Endothelial cell of umbilical vein (primary cell): ENCODE measurements at regions of chr3 and their contacts with region 1.

Region 1: GRCh38 chr3:169497567-169498257 is 165.8 kb downstream of the MECOM start:
- DNase-seq: peak; percentile 94
- H3K4me3 ChIP-seq: no peak overlapping the region
- H3K27ac ChIP-seq: peak overlapping the region; percentile 100
- H3K4me1 ChIP-seq: peaks cover 73% of the 10 kb centered on the region
- H3K27me3 ChIP-seq: no peaks in the 10 kb centered on the region
- CTCF ChIP-seq: no peak
- POLR2A ChIP-seq: no peak

Region 2: DNA sequence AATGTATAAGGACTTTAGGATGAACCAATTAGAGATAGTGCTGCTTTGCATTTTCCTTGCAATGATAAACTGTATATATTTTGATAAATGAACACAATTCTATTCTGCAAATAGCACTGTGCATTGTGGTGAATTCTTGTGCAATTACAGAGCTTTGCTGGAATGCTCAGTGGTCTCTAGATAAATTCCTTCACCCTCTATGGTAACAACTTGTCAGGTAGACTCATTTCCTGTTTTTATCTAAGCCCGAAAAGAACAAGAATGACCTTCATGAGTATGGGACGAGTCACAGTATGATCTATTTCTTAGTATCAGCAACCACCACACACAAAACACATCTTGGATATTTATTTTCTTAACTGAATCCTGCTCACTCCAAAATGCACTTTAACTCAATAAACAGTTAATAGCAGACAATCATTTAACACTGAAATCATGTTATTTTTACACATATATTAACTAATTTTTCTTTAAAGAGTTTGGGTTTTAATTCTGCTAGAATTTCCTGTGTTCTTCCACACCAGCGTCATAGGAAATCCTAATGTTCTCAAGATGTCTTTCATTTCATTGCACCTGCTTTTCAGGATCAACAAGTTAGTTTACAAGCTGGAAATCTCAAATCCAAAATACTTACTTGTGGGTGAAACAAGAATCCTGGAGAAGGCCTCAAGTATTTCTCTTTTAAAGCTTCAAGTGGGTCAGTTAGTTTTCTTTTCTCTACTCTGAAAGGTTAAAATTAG is 385.4 kb before region 1 on chr3:
- CTCF ChIA-PET with region 1: interaction called, 4 read pairs
- POLR2A ChIA-PET with region 1: no interaction called
- dilution Hi-C with region 1: no loop called
- intact Hi-C with region 1: loop called (anchors 1 kb)
- DNase-seq: peak; percentile 86
- H3K4me3 ChIP-seq: peak overlapping the region in 1 of 3 experiments; percentile 14
- H3K27ac ChIP-seq: peak overlapping the region; percentile 96
- H3K4me1 ChIP-seq: peaks cover 63% of the 10 kb centered on the region
- H3K27me3 ChIP-seq: no peaks in the 10 kb centered on the region
- CTCF ChIP-seq: no peak
- POLR2A ChIP-seq: peak; percentile 71

Region 3: DNA sequence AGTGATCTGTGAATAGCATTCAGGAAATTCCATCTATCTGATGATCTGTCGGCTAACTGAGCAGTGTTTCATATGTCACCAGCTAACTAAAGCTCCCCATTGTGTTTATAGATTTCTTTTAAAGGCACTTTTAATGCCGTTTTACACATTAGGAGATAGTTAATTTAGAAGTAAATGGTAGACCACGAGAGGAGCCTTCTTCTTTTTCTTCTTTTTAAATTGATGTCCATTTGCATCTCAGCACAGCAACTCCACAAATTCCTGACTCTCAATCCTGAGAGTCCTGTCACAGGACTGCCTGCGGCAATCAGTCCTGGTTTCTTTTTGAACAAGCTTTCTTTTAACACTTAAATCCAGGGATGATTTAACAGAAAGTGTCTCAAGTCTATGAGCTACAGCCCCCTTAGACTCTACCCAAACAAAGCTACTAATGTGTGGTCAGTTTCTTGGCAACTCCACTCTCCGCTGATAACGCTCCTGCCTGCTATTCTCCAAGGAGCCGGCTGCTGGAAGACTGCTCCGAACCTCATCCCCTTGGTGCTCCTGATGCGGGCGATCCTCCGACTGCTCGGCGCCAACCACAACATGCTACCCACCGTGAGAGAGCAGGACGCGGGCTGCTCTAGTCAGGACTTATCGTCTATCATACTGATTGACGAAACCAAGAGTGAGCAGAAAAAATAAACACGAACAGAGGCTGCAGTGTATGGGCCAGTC is 255.6 kb before region 1 on chr3:
- CTCF ChIA-PET with region 1: no interaction called
- POLR2A ChIA-PET with region 1: no interaction called
- dilution Hi-C with region 1: no loop called
- intact Hi-C with region 1: loop called (anchors 2 kb)
- DNase-seq: peak; percentile 87
- H3K4me3 ChIP-seq: peak overlapping the region; percentile 40 to 79 (median 42)
- H3K27ac ChIP-seq: peak overlapping the region; percentile 97
- H3K4me1 ChIP-seq: peaks cover 64% of the 10 kb centered on the region
- H3K27me3 ChIP-seq: no peaks in the 10 kb centered on the region
- CTCF ChIP-seq: no peak
- POLR2A ChIP-seq: peak; percentile 42

Region 4: DNA sequence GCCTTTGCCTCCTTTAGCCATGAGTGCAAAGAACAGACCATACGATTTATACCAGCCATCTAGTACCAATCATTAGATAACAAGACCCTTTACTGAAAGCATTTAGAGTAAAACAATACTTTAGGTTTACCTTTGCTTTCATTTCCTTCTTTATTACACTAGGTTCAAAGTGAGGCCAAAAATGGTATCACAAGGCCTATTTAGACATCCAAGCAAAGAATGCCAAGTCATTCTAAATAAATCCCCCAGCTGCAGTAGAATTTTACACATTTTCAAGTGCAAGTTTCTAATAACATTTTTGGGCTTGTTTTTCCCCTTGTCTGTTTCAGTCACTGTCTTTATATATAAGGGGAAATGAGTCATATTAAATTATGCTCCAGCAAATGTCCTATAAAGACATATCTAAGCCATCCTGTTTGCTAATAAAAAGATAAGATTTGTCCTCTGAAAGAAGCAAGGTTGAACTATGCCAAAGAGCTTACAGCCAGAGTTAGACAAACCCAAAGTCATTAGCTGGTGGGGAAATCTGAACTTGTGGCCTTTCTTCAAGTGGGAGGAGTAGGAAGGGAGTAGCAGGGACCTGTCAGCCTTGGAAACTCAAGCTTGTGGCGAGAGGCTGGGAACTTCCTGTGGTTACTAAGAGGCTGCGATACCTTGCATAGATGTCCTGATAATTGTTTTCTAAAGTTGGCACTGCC is 66.9 kb before region 1 on chr3:
- CTCF ChIA-PET with region 1: interaction called, 8 read pairs
- POLR2A ChIA-PET with region 1: interaction called, 3 read pairs
- dilution Hi-C with region 1: no loop called
- intact Hi-C with region 1: loop called (anchors 1 kb)
- DNase-seq: peak; percentile 90
- H3K4me3 ChIP-seq: no peak overlapping the region
- H3K27ac ChIP-seq: peak overlapping the region; percentile 79
- H3K4me1 ChIP-seq: peaks cover 30% of the 10 kb centered on the region
- H3K27me3 ChIP-seq: no peaks in the 10 kb centered on the region
- CTCF ChIP-seq: no peak
- POLR2A ChIP-seq: no peak

Region 5: GRCh38 chr3:169478566-169479313 is 19.0 kb before region 1 on chr3:
- CTCF ChIA-PET with region 1: interaction called, 6 read pairs
- POLR2A ChIA-PET with region 1: interaction called, 3 read pairs
- dilution Hi-C with region 1: no loop called
- intact Hi-C with region 1: loop called (anchors 1 kb)
- DNase-seq: no peak
- H3K4me3 ChIP-seq: no peak overlapping the region
- H3K27ac ChIP-seq: peak overlapping the region; percentile 34
- H3K4me1 ChIP-seq: peaks cover 6% of the 10 kb centered on the region
- H3K27me3 ChIP-seq: no peaks in the 10 kb centered on the region
- CTCF ChIP-seq: no peak
- POLR2A ChIP-seq: no peak

Region 6: GRCh38 chr3:169542331-169542751 is 44.6 kb after region 1 on chr3:
- CTCF ChIA-PET with region 1: no interaction called
- POLR2A ChIA-PET with region 1: no interaction called
- dilution Hi-C with region 1: no loop called
- intact Hi-C with region 1: loop called (anchors 5 kb)
- DNase-seq: peak; percentile 81
- H3K4me3 ChIP-seq: no peak overlapping the region
- H3K27ac ChIP-seq: peak overlapping the region; percentile 5
- H3K4me1 ChIP-seq: peaks cover 10% of the 10 kb centered on the region
- H3K27me3 ChIP-seq: no peaks in the 10 kb centered on the region
- CTCF ChIP-seq: no peak
- POLR2A ChIP-seq: no peak